Heart left ventricle (tissue), 16 donors: ENCODE measurements at regions of chr10 and their contacts with region 1.

Region 1: GRCh38 chr10:68732651-68733050 is 11.6 kb downstream of the CCAR1 start:
- DNase-seq: no peak
- ATAC-seq: no peak
- H3K4me3 ChIP-seq: no peak overlapping the region
- H3K27ac ChIP-seq: no peak overlapping the region
- H3K4me1 ChIP-seq: no peaks in the 10 kb centered on the region
- H3K27me3 ChIP-seq: no peaks in the 10 kb centered on the region
- CTCF ChIP-seq: no peak
- POLR2A ChIP-seq: no peak

Region 2: DNA sequence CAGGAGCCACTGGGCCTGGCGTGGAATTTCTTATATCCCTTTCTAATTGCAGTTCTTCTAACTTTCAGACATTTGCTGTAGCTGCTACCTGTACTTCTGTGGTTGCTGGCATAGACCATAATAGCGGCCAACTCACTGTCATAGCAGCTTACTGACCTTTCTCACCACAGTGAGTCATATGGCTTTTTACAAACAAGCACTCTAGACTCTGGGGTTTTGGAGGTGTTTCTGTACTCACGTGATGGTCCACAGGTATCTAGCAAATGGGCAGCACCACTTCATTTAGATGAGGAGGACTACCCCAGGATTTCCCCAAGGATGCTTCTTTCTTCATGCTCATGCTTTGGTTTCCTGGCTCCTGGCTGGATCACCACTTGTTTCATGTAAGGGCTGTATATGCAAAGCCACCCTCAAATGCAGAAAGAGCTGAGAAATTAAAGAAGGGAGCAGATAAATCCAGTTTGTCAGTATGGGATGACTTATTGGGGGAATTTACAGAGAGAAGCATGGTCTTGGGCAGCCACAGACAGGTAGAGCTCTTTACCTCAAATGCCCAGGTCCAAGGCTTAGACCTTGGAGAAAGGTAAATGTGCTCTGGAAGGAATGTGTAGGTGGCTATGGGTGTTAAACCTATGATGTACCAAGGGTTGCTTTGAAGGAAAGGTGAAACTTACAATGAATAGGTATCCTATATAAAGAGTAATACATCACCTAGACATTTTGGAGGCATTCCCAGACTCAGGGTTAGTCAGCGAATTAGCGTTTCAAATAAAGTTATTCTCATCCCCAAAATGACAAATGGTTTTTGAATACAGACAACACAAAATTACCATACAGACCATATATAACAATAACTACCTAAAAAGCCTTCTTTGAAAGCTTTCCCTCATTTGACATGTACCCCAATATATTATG is 189.4 kb before region 1 on chr10:
- intact Hi-C with region 1: loop called in 1 of 10 experiments (anchors 10 kb)
- DNase-seq: no peak
- ATAC-seq: no peak
- H3K4me3 ChIP-seq: no peak overlapping the region
- H3K27ac ChIP-seq: peak overlapping the region in 1 of 12 donors; percentile 13
- H3K4me1 ChIP-seq: no peaks in the 10 kb centered on the region
- H3K27me3 ChIP-seq: no peaks in the 10 kb centered on the region
- CTCF ChIP-seq: no peak
- POLR2A ChIP-seq: no peak

Region 3: GRCh38 chr10:68566955-68567354 is 165.7 kb before region 1 on chr10:
- intact Hi-C with region 1: no loop called
- DNase-seq: no peak
- ATAC-seq: no peak
- H3K4me3 ChIP-seq: no peak overlapping the region
- H3K27ac ChIP-seq: peak overlapping the region in 1 of 12 donors; percentile 13
- H3K4me1 ChIP-seq: peaks cover 0 to 12% (median 3%) of the 10 kb centered on the region in 12 donors
- H3K27me3 ChIP-seq: peaks cover 0 to 20% (median 0%) of the 10 kb centered on the region in 9 donors
- CTCF ChIP-seq: no peak
- POLR2A ChIP-seq: no peak